GM10248 (cell line): ENCODE measurements at regions of chr14 and their contacts with region 1.

Region 1: GRCh38 chr14:69648477-69649451 is 37.4 kb downstream of the SUSD6 start:
- DNase-seq: peak; percentile 45
- CTCF ChIP-seq: no peak

Region 2: DNA sequence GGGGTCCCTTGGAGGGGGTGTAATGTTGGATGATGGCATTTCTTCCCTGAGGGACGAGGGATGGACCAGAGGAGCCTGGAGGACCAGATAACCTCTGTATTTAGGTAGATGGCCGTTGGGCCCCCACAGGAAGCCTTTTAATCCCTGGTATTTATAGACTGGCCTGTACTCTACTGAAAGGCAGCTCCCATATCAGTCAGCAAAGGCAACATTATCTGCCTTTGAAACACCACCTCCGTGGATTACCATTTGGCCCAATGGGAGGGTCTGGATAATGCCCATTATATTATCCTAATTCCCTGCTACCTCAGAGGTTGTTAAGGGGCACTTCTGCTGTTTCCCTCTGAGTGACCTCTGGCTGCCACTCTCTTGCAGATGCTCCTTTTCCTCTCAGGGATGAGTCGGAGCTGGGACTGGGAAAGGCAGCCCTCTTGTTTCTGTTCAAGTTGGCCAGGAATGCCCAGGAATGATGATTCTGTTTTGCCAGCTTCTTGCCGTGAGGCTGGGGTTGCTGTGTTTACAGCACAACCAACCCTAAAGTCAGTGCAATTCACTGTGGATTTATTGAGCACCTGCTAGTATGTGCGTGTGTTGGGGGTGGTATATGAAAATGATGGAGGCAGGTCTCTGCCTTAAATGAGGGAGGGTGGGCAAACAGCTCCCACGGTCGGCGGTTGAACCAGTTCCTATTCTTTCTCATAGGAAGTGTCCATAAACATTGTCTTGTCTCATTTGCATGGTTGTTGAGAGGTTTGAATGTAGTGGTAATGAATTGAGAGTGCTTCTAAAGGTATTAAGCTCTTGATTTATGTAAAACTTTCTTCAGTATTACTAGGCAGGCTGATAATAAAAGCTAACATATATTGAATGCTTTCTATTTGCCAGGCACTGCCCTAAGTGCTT is 19.3 kb before region 1 on chr14:
- CTCF ChIA-PET with region 1: interaction called, 22 read pairs
- POLR2A ChIA-PET with region 1: no interaction called
- DNase-seq: peak; percentile 44
- CTCF ChIP-seq: no peak

Region 3: GRCh38 chr14:69637503-69638030 is 11.2 kb before region 1 on chr14:
- CTCF ChIA-PET with region 1: interaction called, 11 read pairs
- POLR2A ChIA-PET with region 1: no interaction called
- DNase-seq: no peak
- CTCF ChIP-seq: no peak

Region 4: DNA sequence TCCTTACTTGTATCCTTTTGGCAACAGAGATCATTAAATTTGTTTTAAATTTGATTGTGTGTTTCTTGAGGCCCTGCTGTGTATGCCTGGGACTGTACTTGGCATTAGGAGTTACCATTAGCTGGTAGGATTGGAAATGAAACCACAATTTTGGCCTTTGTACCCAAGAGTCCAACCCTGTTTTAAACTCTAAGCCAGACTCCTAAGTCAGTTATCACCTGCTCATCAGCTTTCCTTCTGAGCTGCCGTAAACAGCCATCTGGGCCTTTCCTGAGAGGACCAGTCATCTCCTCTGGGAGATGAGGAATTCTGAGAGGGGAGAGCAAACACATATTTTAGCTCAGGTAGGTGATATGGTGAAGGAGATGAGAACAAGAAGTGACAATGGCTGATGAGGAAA is 43.8 kb after region 1 on chr14:
- CTCF ChIA-PET with region 1: no interaction called
- POLR2A ChIA-PET with region 1: no interaction called
- DNase-seq: no peak
- CTCF ChIP-seq: no peak